ENCODE measurements at regions of chr5 and their contacts with region 1.

Region 1: DNA sequence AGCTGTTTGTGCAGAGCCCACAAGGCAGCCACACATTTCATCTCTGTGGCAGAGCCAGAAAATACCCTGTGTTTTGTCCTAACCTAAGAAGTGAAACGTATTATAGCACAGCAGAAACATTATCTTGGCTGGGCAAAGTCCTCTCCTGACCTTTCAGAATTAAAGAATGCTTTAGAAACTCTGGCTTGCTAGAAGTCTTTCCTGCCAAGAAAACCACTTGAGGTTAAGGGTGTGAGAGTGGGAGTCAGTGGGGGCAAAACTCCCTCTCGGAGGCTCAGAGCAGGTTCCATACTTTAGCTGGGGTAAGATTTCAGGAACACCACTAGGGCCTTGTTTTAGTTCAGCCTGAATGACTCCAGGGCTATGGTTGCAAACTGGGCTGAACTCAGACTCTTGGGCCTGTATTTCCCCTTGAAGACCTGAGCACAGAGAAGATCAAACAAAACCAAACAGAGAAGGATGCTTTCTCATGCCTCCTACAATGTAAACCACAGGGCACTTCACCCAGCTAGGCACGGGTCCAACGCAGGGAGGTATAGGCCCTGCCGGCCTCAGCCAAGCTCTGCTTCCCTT is 48.0 kb downstream of the ZNF366 start:
- DNase-seq: no peak
- ATAC-seq: no peak
- H3K4me3 ChIP-seq: no peak overlapping the region
- H3K27ac ChIP-seq: peak overlapping the region in 2 of 10 donors; percentile 1 to 60
- H3K4me1 ChIP-seq: peaks cover 9 to 73% (median 52%) of the 10 kb centered on the region in 9 donors
- H3K27me3 ChIP-seq: no peaks in the 10 kb centered on the region
- CTCF ChIP-seq: no peak

Region 2: GRCh38 chr5:72494623-72495124 is 35.5 kb after region 1 on chr5:
- intact Hi-C with region 1: loop called in 1 of 10 experiments (anchors 5 kb)
- DNase-seq: no peak
- ATAC-seq: no peak
- H3K4me3 ChIP-seq: no peak overlapping the region
- H3K27ac ChIP-seq: peak overlapping the region in 2 of 10 donors; percentile 4 to 12
- H3K4me1 ChIP-seq: peaks cover 0 to 30% (median 9%) of the 10 kb centered on the region in 9 donors
- H3K27me3 ChIP-seq: no peaks in the 10 kb centered on the region
- CTCF ChIP-seq: no peak

Region 3: DNA sequence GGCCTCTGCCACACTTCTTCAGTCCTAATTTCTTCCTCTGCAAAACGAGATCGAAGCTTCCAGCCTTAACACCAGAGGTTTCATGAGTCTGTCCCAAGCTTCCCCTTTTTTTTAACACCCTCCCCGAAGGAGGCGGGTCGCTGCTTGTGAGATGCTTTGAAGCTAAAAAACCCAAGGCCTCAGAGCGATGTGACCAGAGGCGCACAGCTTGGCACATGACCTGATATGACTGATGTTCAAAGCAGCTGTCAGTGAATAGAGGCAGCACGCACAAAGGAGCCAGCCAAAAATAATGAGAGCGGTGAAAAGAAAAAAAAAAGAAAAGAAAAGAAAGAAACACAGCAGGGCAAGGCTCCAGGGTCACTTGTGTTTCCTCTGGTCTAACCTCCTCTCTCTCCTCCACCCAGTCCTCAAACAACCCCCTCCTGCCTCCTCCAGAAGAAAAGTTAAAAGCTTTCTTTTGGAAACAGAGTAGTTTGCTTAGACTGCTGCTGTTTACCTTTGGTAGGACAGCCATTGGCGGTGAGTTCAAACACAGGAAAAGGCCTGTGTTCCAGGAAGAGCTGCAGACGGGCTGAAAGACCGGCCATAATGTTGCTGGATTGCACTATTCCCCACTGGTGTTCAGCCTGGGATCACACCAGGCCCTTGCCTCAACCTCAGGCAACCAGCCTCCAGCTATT is 59.0 kb after region 1 on chr5:
- intact Hi-C with region 1: loop called in 3 of 10 experiments (anchors 5 to 10 kb)
- DNase-seq: peak; percentile 48 to 59
- ATAC-seq: peak; percentile 69 to 87 (median 79)
- H3K4me3 ChIP-seq: no peak overlapping the region
- H3K27ac ChIP-seq: peak overlapping the region; percentile 36 to 88 (median 68)
- H3K4me1 ChIP-seq: peaks cover 0 to 25% (median 20%) of the 10 kb centered on the region in 9 donors
- H3K27me3 ChIP-seq: no peaks in the 10 kb centered on the region
- CTCF ChIP-seq: no peak

Region 4: GRCh38 chr5:74017786-74018211 is 1558.6 kb after region 1 on chr5:
- intact Hi-C with region 1: no loop called
- DNase-seq: no peak
- ATAC-seq: peak in 2 of 8 donors; percentile 32 to 61
- H3K4me3 ChIP-seq: no peak overlapping the region
- H3K27ac ChIP-seq: no peak overlapping the region
- H3K4me1 ChIP-seq: peaks cover 0 to 11% (median 0%) of the 10 kb centered on the region in 9 donors
- H3K27me3 ChIP-seq: peaks cover 0 to 7% (median 0%) of the 10 kb centered on the region in 7 donors
- CTCF ChIP-seq: no peak

Measured in heart right ventricle (tissue), 16 donors.